ENCODE measurements at regions of chr9 and their contacts with region 1.

Region 1: GRCh38 chr9:35814841-35815543 is at the start of gene HINT2:
- DNase-seq: peak; percentile 99
- H3K4me3 ChIP-seq: peak within 1 kb of the TSS; percentile 80
- CTCF ChIP-seq: no peak

Region 2: GRCh38 chr9:35748858-35749514 is 66.0 kb before region 1 on chr9 and contains the starts of genes GBA2 and RGP1:
- in situ Hi-C with region 1: loop called (anchors 5 kb)
- DNase-seq: no peak
- H3K4me3 ChIP-seq: peak within 1 kb of the TSS; percentile 86
- CTCF ChIP-seq: no peak

Region 3: GRCh38 chr9:36903541-36904435 is 1088.8 kb after region 1 on chr9:
- in situ Hi-C with region 1: no loop called
- DNase-seq: peak; percentile 62
- H3K4me3 ChIP-seq: no peak overlapping the region
- CTCF ChIP-seq: no peak

Measured in astrocyte of the cerebellum (primary cell).